ENCODE measurements at regions of chr16 and their contacts with region 1.

Region 1: DNA sequence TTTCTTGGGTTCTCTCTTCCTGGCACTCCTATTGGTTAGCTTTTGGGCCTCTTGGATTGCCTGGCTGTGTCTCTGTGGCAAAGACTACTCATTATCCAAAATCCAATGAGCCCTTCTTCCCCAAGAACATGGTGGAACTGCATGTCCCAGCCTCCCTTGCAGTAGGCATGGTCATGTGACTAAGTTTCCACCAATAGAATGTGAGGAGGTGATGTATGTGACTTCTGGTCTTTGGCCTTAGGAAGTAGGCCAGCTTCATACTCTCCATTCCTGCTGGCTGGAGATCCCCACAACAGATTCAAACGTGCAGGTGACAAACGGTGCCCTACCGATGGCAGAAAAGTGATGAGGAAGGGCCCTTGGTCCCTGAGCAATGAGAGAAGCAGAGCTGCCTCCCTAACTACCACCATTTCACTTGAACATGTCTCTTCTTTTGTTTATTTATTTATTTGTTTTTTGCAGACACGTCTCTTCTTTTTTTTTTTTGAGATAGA is 17.3 kb upstream of the SPN start:
- DNase-seq: no peak
- H3K4me3 Mint-ChIP-seq: no peak overlapping the region
- H3K27ac Mint-ChIP-seq: no peak overlapping the region
- H3K4me1 Mint-ChIP-seq: peaks cover 32% of the 10 kb centered on the region
- H3K27me3 Mint-ChIP-seq: no peaks in the 10 kb centered on the region

Region 2: DNA sequence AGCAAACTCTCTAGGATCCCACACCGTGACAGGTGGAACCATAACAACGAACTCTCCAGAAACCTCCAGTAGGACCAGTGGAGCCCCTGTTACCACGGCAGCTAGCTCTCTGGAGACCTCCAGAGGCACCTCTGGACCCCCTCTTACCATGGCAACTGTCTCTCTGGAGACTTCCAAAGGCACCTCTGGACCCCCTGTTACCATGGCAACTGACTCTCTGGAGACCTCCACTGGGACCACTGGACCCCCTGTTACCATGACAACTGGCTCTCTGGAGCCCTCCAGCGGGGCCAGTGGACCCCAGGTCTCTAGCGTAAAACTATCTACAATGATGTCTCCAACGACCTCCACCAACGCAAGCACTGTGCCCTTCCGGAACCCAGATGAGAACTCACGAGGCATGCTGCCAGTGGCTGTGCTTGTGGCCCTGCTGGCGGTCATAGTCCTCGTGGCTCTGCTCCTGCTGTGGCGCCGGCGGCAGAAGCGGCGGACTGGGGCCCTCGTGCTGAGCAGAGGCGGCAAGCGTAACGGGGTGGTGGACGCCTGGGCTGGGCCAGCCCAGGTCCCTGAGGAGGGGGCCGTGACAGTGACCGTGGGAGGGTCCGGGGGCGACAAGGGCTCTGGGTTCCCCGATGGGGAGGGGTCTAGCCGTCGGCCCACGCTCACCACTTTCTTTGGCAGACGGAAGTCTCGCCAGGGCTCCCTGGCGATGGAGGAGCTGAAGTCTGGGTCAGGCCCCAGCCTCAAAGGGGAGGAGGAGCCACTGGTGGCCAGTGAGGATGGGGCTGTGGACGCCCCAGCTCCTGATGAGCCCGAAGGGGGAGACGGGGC is 18.6 kb after region 1 on chr16:
- CTCF ChIA-PET with region 1: interaction called, 3 read pairs
- POLR2A ChIA-PET with region 1: no interaction called
- intact Hi-C with region 1: loop called (anchors 2 kb)
- DNase-seq: peak; percentile 71
- H3K4me3 Mint-ChIP-seq: peak overlapping the region; percentile 97
- H3K27ac Mint-ChIP-seq: peak overlapping the region; percentile 100
- H3K4me1 Mint-ChIP-seq: peaks cover 51% of the 10 kb centered on the region
- H3K27me3 Mint-ChIP-seq: no peaks in the 10 kb centered on the region

Region 3: DNA sequence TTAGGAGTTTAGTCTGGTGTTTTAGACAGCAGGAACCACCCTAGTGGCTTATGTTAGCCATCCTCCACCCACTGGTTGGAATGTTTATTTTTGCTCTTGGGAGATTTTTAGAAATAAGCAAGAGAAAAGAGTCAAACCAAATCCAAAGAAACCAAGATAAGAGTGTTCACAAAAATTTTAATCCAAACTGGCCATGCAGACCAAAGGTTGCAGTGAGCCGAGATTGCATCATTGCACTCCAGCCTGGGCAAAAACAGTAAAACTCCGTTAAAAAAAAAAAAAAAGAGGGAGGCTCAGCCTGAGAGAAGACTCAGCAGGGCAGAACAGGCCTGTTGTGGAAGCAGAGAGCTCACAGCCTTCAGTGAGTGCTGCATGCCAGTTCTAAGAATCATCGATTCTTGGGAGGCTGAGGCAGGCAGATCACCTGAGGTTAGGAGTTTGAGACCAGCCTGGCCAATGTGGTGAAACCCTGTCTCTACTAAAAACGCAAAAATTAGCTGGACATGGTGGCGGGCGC is 112.3 kb after region 1 on chr16:
- CTCF ChIA-PET with region 1: no interaction called
- POLR2A ChIA-PET with region 1: no interaction called
- intact Hi-C with region 1: no loop called
- DNase-seq: no peak
- H3K4me3 Mint-ChIP-seq: no peak overlapping the region
- H3K27ac Mint-ChIP-seq: no peak overlapping the region
- H3K4me1 Mint-ChIP-seq: peaks cover 20% of the 10 kb centered on the region
- H3K27me3 Mint-ChIP-seq: no peaks in the 10 kb centered on the region